PC-3 (cell line): ENCODE measurements at regions of chr4 and their contacts with region 1.

Region 1: GRCh38 chr4:53908661-53909078 is 155.7 kb downstream of the CHIC2 start:
- DNase-seq: peak; percentile 95
- ATAC-seq: peak; percentile 85
- H3K4me3 ChIP-seq: peak overlapping the region; percentile 55
- H3K27ac ChIP-seq: peak overlapping the region; percentile 27
- H3K4me1 ChIP-seq: peaks cover 25% of the 10 kb centered on the region
- H3K27me3 ChIP-seq: no peaks in the 10 kb centered on the region
- CTCF ChIP-seq: peak; percentile 97

Region 2: DNA sequence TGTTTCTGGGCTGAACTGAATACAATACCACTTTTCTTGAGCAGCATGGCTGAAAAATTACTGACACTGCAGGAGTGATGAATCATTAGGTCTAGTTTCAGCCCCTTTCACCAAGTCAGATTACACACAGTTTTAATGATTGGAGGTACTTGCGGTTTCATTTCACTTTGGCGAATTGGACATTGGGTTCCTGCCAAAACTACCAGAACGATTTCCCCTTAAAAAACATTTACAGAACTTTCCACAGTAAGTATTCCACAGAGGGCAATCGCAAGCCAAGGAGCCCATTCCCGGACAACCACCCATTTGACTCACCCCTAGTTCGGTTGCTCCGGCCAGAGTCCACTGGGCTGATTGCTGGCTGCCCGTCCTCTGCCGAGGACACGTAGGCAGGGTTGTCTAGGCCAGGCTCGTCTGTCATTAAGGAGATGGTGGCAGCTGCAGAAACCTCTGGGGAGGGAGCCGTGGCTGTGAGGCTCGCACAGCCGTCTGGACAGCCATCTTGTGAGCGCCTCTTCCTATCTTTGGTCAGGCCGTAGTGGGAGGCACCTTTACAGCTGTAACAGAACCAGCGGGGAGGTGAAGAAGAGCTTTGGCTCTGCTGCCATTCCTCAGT is 400.9 kb before region 1 on chr4:
- CTCF ChIA-PET with region 1: no interaction called
- POLR2A ChIA-PET with region 1: no interaction called
- intact Hi-C with region 1: loop called (anchors 5 kb)
- DNase-seq: no peak
- ATAC-seq: no peak; the same call in 1 of the 2 replicates
- H3K4me3 ChIP-seq: no peak overlapping the region
- H3K27ac ChIP-seq: no peak overlapping the region
- H3K4me1 ChIP-seq: peaks cover 11% of the 10 kb centered on the region; the same call in 1 of the 2 replicates
- H3K27me3 ChIP-seq: no peaks in the 10 kb centered on the region
- CTCF ChIP-seq: no peak

Region 3: GRCh38 chr4:53709693-53710092 is 199.0 kb before region 1 on chr4:
- CTCF ChIA-PET with region 1: interaction called, 10 read pairs
- POLR2A ChIA-PET with region 1: no interaction called
- intact Hi-C with region 1: loop called (anchors 1 kb)
- DNase-seq: peak; percentile 10
- ATAC-seq: peak; percentile 9; the same call in 1 of the 2 replicates
- H3K4me3 ChIP-seq: no peak overlapping the region
- H3K27ac ChIP-seq: no peak overlapping the region
- H3K4me1 ChIP-seq: peaks cover 15% of the 10 kb centered on the region
- H3K27me3 ChIP-seq: no peaks in the 10 kb centered on the region
- CTCF ChIP-seq: peak; percentile 42

Region 4: GRCh38 chr4:53929955-53930798 is 21.5 kb after region 1 on chr4:
- CTCF ChIA-PET with region 1: interaction called, 12 read pairs
- POLR2A ChIA-PET with region 1: interaction called, 3 read pairs
- intact Hi-C with region 1: loop called (anchors 1 kb)
- DNase-seq: peak; percentile 94
- ATAC-seq: peak; percentile 86
- H3K4me3 ChIP-seq: no peak overlapping the region
- H3K27ac ChIP-seq: peak overlapping the region; percentile 90
- H3K4me1 ChIP-seq: peaks cover 36% of the 10 kb centered on the region
- H3K27me3 ChIP-seq: no peaks in the 10 kb centered on the region
- CTCF ChIP-seq: peak; percentile 97

Region 5: DNA sequence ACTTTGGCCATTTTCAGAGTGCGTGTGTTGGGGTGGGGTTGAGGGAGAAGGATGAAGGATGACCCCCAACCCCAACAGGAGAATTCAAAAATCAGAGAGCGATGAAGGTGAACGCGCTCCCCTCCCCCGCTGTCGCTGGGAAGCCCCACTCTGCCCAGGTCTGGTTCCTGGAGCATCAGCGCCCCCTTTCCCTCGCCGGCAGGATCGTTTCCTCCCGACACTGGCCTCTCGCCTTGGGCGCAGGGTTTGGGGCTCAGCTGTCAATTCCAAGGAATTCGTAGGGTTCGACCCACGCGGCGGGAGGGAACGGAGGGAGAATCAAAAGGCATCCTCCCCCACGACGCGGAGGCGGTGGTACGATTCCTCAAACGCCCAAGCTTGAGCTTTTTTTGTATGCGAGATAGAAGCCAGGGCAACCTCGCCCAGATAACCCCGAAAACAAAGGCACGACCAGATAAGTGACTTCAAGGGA is 319.4 kb after region 1 on chr4:
- CTCF ChIA-PET with region 1: interaction called, 28 read pairs
- POLR2A ChIA-PET with region 1: no interaction called
- intact Hi-C with region 1: loop called (anchors 1 kb)
- DNase-seq: peak; percentile 83
- ATAC-seq: peak; percentile 65
- H3K4me3 ChIP-seq: peak overlapping the region; percentile 76
- H3K27ac ChIP-seq: no peak overlapping the region
- H3K4me1 ChIP-seq: peaks cover 41% of the 10 kb centered on the region
- H3K27me3 ChIP-seq: peaks cover 40% of the 10 kb centered on the region
- CTCF ChIP-seq: peak; percentile 96